CD4-positive, alpha-beta memory T cell (primary cell): ENCODE measurements at regions of chr15 and their contacts with region 1.

Region 1: GRCh38 chr15:44663409-44664308 is at the start of gene SPG11:
- DNase-seq: peak; percentile 93 to 97 (median 94)
- H3K4me3 ChIP-seq: peak within 1 kb of the TSS; percentile 49 to 81
- H3K4me3 Mint-ChIP-seq: peak within 1 kb of the TSS; percentile 94 to 99 (median 98)
- H3K27ac ChIP-seq: peak within 1 kb of the TSS; percentile 96
- H3K27ac Mint-ChIP-seq: peak within 1 kb of the TSS; percentile 93 to 100 (median 97)
- H3K4me1 ChIP-seq: peaks cover 69% of the 10 kb centered on the region
- H3K4me1 Mint-ChIP-seq: peaks cover 47 to 75% (median 58%) of the 10 kb centered on the region in 4 donors
- H3K27me3 ChIP-seq: no peaks in the 10 kb centered on the region
- H3K27me3 Mint-ChIP-seq: no peaks in the 10 kb centered on the region
- total RNA-seq, gene SPG11: 112 to 121 TPM

Region 2: GRCh38 chr15:44584162-44584749 is 79.4 kb before region 1 on chr15:
- CTCF ChIA-PET with region 1: interaction called, 8 read pairs
- POLR2A ChIA-PET with region 1: interaction called, 24 read pairs
- intact Hi-C with region 1: loop called (anchors 5 kb)
- DNase-seq: peak; percentile 46 to 53 (median 52)
- H3K4me3 ChIP-seq: no peak overlapping the region
- H3K4me3 Mint-ChIP-seq: no peak overlapping the region
- H3K27ac ChIP-seq: no peak overlapping the region
- H3K27ac Mint-ChIP-seq: peak overlapping the region in 6 of 7 donors; percentile 12 to 86 (median 62)
- H3K4me1 ChIP-seq: peaks cover 2% of the 10 kb centered on the region
- H3K4me1 Mint-ChIP-seq: peaks cover 5 to 19% (median 12%) of the 10 kb centered on the region in 4 donors
- H3K27me3 ChIP-seq: no peaks in the 10 kb centered on the region
- H3K27me3 Mint-ChIP-seq: no peaks in the 10 kb centered on the region

Region 3: DNA sequence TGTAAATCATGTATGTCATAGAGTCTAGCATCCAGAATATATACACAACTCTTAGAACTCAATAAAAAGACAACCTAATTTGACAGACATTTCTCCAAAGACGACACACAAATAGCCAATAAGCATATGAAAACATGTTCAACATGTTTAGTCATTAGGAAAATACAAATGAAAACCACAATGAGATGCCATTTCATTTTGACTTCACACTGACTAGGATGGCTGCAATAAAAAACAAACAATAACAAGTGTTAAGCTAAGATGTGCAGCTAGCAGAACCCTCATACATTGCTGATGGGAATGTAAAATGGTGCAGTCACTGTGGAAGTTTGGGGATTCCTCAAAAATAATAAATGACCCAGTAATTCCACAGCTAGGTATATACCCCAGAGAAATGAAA is 16.6 kb before region 1 on chr15:
- CTCF ChIA-PET with region 1: interaction called, 7 read pairs
- POLR2A ChIA-PET with region 1: interaction called, 23 read pairs
- intact Hi-C with region 1: no loop called
- DNase-seq: no peak
- H3K4me3 ChIP-seq: no peak overlapping the region
- H3K4me3 Mint-ChIP-seq: no peak overlapping the region
- H3K27ac ChIP-seq: no peak overlapping the region
- H3K27ac Mint-ChIP-seq: peak overlapping the region in 4 of 7 donors; percentile 14 to 74 (median 40)
- H3K4me1 ChIP-seq: peaks cover 19% of the 10 kb centered on the region
- H3K4me1 Mint-ChIP-seq: peaks cover 40 to 59% (median 48%) of the 10 kb centered on the region in 4 donors
- H3K27me3 ChIP-seq: no peaks in the 10 kb centered on the region
- H3K27me3 Mint-ChIP-seq: no peaks in the 10 kb centered on the region

Region 4: DNA sequence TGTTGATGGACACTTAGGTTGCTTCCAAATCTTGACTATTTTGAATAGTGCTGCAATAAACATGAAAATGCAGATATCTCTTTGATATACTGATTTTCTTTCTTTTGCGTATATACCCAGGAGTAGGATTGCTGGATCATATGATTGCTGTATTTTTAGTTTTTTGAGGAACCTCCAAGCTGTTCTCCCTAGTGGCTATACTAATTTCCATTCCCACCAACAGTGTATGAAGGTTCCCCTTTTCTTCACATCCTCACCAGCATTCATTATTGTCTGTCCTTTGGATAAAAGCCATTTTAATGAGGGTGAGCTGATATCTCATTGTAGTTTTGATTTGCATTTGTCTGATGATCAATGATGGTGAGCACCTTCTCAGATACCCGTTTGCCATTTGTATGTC is 35.0 kb after region 1 on chr15:
- CTCF ChIA-PET with region 1: interaction called, 9 read pairs
- POLR2A ChIA-PET with region 1: interaction called, 5,737 read pairs
- intact Hi-C with region 1: no loop called
- DNase-seq: no peak
- H3K4me3 ChIP-seq: no peak overlapping the region
- H3K4me3 Mint-ChIP-seq: no peak overlapping the region
- H3K27ac ChIP-seq: no peak overlapping the region
- H3K27ac Mint-ChIP-seq: peak overlapping the region in 1 of 7 donors; percentile 37
- H3K4me1 ChIP-seq: peaks cover 12% of the 10 kb centered on the region
- H3K4me1 Mint-ChIP-seq: peaks cover 17 to 47% (median 31%) of the 10 kb centered on the region in 4 donors
- H3K27me3 ChIP-seq: no peaks in the 10 kb centered on the region
- H3K27me3 Mint-ChIP-seq: no peaks in the 10 kb centered on the region

Region 5: GRCh38 chr15:44728576-44729407 is 65.1 kb after region 1 on chr15:
- CTCF ChIA-PET with region 1: interaction called, 821 read pairs
- POLR2A ChIA-PET with region 1: interaction called, 5,737 read pairs
- intact Hi-C with region 1: loop called (anchors 1 kb)
- DNase-seq: peak; percentile 95 to 98 (median 97)
- H3K4me3 ChIP-seq: peak overlapping the region; percentile 74 to 99
- H3K4me3 Mint-ChIP-seq: peak overlapping the region; percentile 96 to 100 (median 99)
- H3K27ac ChIP-seq: peak overlapping the region; percentile 98
- H3K27ac Mint-ChIP-seq: peak overlapping the region; percentile 96 to 100 (median 99)
- H3K4me1 ChIP-seq: peaks cover 79% of the 10 kb centered on the region
- H3K4me1 Mint-ChIP-seq: peaks cover 47 to 91% (median 63%) of the 10 kb centered on the region in 4 donors
- H3K27me3 ChIP-seq: no peaks in the 10 kb centered on the region
- H3K27me3 Mint-ChIP-seq: no peaks in the 10 kb centered on the region

Region 6: DNA sequence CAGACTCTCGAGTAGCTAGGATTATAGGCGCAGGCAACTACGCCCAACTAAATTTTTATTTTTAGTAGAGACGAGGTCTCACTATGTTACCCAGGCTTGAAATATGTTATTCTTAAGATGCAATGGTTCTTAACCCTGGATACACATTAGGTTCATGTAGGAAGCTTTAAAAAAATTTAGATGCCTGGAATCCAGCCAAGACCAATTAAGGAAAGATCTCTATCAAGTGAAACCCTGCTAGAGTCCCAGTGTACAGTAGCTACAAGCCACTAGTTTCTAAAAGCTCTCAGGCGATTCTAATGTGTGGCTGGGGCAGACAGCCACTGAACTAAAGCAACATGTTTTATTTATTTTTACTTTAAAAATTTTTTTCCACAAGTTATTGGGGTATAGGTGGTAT is 105.9 kb after region 1 on chr15:
- CTCF ChIA-PET with region 1: no interaction called
- POLR2A ChIA-PET with region 1: no interaction called
- intact Hi-C with region 1: no loop called
- DNase-seq: no peak
- H3K4me3 ChIP-seq: no peak overlapping the region
- H3K4me3 Mint-ChIP-seq: no peak overlapping the region
- H3K27ac ChIP-seq: no peak overlapping the region
- H3K27ac Mint-ChIP-seq: no peak overlapping the region
- H3K4me1 ChIP-seq: no peaks in the 10 kb centered on the region
- H3K4me1 Mint-ChIP-seq: peaks cover 0 to 2% (median 0%) of the 10 kb centered on the region in 4 donors
- H3K27me3 ChIP-seq: no peaks in the 10 kb centered on the region
- H3K27me3 Mint-ChIP-seq: no peaks in the 10 kb centered on the region